Right ventricle myocardium superior (tissue), 1 donor: ENCODE measurements at regions of chr5 and their contacts with region 1.

Region 1: GRCh38 chr5:157328277-157328912 is 62.5 kb downstream of the CYFIP2 start:
- DNase-seq: peak; percentile 68
- ATAC-seq: peak; percentile 97

Region 2: GRCh38 chr5:157088342-157088990 is 239.9 kb before region 1 on chr5:
- intact Hi-C with region 1: no loop called
- DNase-seq: no peak
- ATAC-seq: no peak

Region 3: DNA sequence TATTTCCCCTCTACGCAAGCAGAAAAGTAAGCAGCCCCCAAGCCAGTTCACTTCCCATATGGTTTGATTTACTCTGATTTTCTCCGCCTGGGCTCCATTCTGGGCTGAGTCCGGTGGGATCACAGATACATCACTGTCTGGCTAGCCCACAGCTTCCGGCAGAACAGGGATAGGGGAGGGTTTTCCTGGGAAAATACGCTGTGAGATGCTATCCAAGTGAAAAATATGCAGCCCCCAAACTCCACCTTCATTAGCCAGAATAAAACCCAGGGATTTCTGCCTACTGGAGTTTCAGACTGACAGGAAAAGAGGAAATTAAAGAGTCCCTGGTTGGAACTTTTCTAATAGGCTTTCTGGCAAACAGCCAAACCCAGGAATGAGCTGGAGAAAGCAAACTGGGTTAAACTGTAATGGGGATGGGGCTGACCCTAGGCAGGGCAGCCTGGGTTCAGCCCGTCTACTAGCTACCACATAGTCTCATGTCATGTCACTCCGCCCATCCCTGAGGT is 114.7 kb after region 1 on chr5:
- intact Hi-C with region 1: no loop called
- DNase-seq: no peak
- ATAC-seq: peak; percentile 45

Region 4: GRCh38 chr5:157476702-157477408 is 148.5 kb after region 1 on chr5:
- intact Hi-C with region 1: loop called (anchors 5 kb)
- DNase-seq: no peak
- ATAC-seq: peak; percentile 77

Region 5: DNA sequence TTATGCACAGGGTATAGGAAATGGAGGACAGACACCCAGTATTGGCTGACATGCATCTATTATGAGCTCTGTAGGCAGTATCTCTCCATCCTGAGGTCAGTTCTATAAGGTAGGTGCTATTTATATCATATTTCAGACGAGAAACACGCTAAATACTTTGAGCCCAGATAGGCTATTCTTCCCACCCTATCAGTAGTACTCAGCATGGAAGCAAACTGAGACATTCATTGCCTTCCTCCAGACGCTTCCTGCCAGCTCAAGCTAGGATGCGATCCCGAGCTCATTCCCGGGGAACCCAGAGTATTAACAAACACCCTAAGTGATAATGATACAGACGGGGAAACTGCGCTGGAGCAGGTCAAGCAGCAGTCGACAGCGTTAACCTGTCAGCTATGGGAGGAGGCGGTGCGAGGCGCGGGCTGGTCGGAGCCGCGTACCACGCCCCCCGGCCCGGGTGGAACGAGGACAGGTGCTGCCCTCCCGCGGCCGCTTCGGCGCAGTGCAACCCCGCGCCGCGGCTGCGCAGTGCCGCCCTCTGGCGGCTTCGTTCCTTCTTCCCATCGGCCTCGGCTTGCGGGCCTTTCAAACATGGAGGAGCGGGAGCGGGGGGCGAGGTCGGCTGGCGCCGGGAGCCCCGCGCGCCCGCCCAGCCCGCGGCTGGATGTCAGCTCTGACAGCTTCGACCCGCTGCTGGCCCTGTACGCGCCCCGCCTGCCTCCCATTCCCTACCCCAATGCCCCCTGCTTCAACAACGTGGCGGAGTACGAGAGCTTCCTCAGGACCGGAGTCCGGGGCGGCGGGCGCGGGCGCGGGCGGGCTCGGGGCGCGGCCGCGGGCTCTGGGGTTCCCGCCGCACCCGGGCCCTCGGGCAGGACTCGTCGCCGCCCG is 415.0 kb after region 1 on chr5 and contains the start of gene LSM11:
- intact Hi-C with region 1: loop called (anchors 5 kb)
- DNase-seq: peak; percentile 94
- ATAC-seq: peak; percentile 97
- total RNA-seq, gene LSM11: 1.3 TPM